ENCODE measurements at regions of chr2 and their contacts with region 1.

Region 1: DNA sequence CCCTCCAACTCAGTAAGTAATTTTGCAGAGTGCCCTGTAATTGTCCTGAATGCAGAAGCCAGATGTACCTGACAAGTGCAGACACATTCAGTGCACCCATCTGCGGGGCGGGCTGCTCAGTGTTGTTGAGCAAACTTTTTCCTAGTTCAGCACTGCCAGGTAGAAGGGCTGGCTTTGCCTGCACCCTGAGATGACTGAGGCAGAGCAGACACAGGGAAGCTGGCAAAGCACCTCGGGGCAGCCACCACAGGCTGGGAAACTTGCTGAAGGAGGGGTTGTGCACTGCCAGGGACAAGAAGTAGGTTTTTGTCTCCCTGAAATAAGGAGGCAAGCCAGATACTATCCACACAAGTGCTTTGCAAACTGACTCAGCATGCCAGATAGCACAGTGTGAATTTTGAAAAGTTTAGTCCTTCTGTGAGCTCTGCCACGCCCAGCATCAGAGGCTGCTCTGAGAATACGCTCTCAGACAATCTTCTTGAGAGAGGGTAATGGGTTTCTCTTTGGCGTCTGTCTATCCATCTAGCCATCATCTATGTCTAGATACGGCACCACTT is 62.3 kb downstream of the SOWAHC start:
- DNase-seq: no peak
- ATAC-seq: peak; percentile 54; the same call in 1 of the 2 replicates
- H3K4me3 ChIP-seq: no peak overlapping the region
- H3K27ac ChIP-seq: no peak overlapping the region
- H3K4me1 ChIP-seq: peaks cover 4% of the 10 kb centered on the region; the same call in 1 of the 2 replicates
- H3K27me3 ChIP-seq: no peaks in the 10 kb centered on the region
- CTCF ChIP-seq: no peak

Region 2: GRCh38 chr2:109699646-109700045 is 23.2 kb after region 1 on chr2:
- CTCF ChIA-PET with region 1: no interaction called
- POLR2A ChIA-PET with region 1: interaction called, 11 read pairs
- in situ Hi-C with region 1: no loop called
- intact Hi-C with region 1: no loop called
- DNase-seq: no peak
- ATAC-seq: peak; percentile 52; the same call in 1 of the 2 replicates
- H3K4me3 ChIP-seq: no peak overlapping the region
- H3K27ac ChIP-seq: 0 out of 2 replicates have a peak overlapping the region, but pooled peaks have one; percentile 18
- H3K4me1 ChIP-seq: peaks cover 15% of the 10 kb centered on the region
- H3K27me3 ChIP-seq: no peaks in the 10 kb centered on the region
- CTCF ChIP-seq: no peak

Measured in Panc1 (cell line).